AG04450 (cell line): ENCODE measurements at regions of chr1 and their contacts with region 1.

Region 1: DNA sequence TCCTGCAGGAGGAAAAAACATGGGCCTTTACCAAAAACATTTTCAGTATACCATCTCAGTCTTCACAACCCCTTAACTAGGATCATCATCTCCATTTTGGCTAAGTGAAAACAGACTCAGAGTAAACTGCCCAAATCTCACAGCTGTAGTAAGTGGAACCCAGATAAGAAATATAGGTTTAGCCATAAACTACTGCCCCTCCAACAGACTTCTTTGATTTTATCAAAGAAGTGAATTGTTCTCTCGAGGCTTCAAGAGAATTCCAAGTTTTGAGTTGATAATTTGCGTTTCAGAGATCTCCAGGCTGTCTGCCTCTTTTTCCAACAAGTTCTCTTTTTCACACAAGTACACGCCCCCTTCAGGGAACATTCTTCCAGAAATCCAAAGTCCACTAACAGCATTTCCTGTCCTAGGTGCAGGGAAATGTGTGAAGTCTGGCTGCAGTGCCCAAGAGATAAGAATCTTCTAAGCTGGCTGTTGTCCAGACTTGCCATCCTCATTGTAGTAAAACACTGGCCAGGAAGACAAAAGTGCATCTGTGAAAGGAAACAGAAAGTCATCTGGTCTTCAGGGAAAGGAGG is 30.8 kb downstream of the RNF19B start:
- DNase-seq: no peak
- H3K4me3 ChIP-seq: no peak overlapping the region
- H3K27ac ChIP-seq: no peak overlapping the region
- H3K27me3 ChIP-seq: peaks cover 2% of the 10 kb centered on the region
- CTCF ChIP-seq: no peak

Region 2: DNA sequence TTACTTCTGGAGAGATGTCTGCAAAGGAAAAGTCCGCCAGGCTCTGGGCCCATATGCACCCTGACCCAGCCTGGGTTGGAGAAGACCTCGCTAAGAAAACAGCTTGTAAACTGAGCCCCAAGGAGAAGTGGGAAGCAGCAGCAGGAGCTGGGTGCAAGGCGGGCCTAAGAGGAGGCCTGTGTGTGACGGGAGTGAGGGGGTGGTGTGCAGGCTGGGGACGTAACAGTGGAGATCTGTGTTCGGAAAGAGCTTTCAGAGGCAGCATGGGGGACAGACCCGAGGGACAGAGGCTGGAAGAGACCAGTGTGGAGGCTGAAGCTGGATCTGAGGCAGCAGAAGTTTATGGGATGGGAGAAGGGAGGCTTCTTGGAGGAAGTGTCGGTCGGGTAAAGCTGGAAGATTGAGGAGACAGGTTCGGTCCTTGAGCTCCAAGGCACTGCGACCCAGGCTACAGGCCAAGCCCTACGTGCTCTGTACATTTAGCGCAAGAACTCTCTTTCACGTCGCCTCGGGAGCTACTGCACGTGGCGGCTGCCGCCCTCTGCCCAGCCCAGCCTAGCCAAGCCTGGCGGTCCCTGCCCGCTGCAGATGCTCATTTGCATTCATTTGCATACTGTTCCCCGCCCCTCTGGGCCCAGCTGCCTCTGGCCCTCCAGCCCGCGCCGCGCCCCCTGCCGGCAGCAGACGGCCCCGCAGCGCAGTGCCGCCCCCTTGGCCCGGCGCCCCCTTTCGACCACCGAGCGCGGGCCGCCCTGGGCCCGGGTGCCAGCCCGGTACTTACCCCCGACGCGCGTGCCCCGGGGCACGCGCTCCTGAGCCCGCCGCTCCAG is 41.2 kb before region 1 on chr1:
- CTCF ChIA-PET with region 1: interaction called, 10 read pairs
- POLR2A ChIA-PET with region 1: no interaction called
- DNase-seq: no peak
- H3K4me3 ChIP-seq: peak overlapping the region; percentile 54
- H3K27ac ChIP-seq: no peak overlapping the region
- H3K27me3 ChIP-seq: peaks cover 37% of the 10 kb centered on the region
- CTCF ChIP-seq: peak; percentile 23; the same call in 1 of the 2 replicates

Region 3: GRCh38 chr1:32948905-32949304 is 15.1 kb after region 1 on chr1:
- CTCF ChIA-PET with region 1: interaction called, 10 read pairs
- POLR2A ChIA-PET with region 1: no interaction called
- DNase-seq: no peak
- H3K4me3 ChIP-seq: no peak overlapping the region
- H3K27ac ChIP-seq: no peak overlapping the region
- H3K27me3 ChIP-seq: no peaks in the 10 kb centered on the region
- CTCF ChIP-seq: no peak

Region 4: GRCh38 chr1:33055210-33056008 is 121.6 kb after region 1 on chr1:
- CTCF ChIA-PET with region 1: interaction called, 24 read pairs
- POLR2A ChIA-PET with region 1: interaction called, 3 read pairs
- DNase-seq: peak; percentile 75
- H3K4me3 ChIP-seq: no peak overlapping the region
- H3K27ac ChIP-seq: no peak overlapping the region
- H3K27me3 ChIP-seq: no peaks in the 10 kb centered on the region
- CTCF ChIP-seq: peak; percentile 87

Region 5: DNA sequence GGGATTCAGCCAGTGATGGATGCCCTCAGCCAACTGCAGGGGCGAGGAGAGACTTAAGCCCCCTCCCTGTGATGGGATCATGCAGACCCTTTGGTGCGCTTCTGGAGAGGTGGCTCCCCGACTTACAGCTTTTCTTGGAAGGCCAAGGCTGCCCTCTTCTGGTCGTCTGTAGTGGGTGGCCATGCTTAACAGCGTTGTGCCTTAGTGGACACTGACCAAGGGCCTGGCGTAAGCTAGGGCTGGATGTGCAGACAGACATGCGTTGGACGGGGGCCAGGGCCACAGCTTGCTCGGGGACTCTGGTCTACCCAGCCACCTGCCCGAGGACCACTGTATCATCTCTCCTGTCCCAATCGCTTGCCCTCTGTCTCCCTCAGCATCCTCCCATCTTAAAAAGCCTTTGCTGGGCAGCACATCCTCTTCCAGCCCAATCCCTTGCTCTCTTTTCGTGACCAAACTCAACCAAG is 152.6 kb after region 1 on chr1:
- CTCF ChIA-PET with region 1: interaction called, 41 read pairs
- POLR2A ChIA-PET with region 1: no interaction called
- DNase-seq: peak; percentile 53
- H3K4me3 ChIP-seq: no peak overlapping the region
- H3K27ac ChIP-seq: no peak overlapping the region
- H3K27me3 ChIP-seq: no peaks in the 10 kb centered on the region
- CTCF ChIP-seq: peak; percentile 80